ENCODE measurements at regions of chr4 and their contacts with region 1.

Region 1: GRCh38 chr4:20787940-20788665 is 87.8 kb downstream of the PACRGL start:
- DNase-seq: no peak
- H3K4me3 ChIP-seq: no peak overlapping the region
- H3K27ac ChIP-seq: no peak overlapping the region
- H3K4me1 ChIP-seq: no peaks in the 10 kb centered on the region
- H3K27me3 ChIP-seq: no peaks in the 10 kb centered on the region
- CTCF ChIP-seq: no peak

Region 2: GRCh38 chr4:20159516-20159915 is 628.6 kb before region 1 on chr4:
- CTCF ChIA-PET with region 1: interaction called, 14 read pairs
- dilution Hi-C with region 1: no loop called
- in situ Hi-C with region 1: no loop called
- intact Hi-C with region 1: no loop called
- DNase-seq: no peak
- H3K4me3 ChIP-seq: no peak overlapping the region
- H3K27ac ChIP-seq: no peak overlapping the region
- H3K4me1 ChIP-seq: no peaks in the 10 kb centered on the region
- H3K27me3 ChIP-seq: no peaks in the 10 kb centered on the region
- CTCF ChIP-seq: no peak